ENCODE measurements at regions of chr5 and their contacts with region 1.

Region 1: DNA sequence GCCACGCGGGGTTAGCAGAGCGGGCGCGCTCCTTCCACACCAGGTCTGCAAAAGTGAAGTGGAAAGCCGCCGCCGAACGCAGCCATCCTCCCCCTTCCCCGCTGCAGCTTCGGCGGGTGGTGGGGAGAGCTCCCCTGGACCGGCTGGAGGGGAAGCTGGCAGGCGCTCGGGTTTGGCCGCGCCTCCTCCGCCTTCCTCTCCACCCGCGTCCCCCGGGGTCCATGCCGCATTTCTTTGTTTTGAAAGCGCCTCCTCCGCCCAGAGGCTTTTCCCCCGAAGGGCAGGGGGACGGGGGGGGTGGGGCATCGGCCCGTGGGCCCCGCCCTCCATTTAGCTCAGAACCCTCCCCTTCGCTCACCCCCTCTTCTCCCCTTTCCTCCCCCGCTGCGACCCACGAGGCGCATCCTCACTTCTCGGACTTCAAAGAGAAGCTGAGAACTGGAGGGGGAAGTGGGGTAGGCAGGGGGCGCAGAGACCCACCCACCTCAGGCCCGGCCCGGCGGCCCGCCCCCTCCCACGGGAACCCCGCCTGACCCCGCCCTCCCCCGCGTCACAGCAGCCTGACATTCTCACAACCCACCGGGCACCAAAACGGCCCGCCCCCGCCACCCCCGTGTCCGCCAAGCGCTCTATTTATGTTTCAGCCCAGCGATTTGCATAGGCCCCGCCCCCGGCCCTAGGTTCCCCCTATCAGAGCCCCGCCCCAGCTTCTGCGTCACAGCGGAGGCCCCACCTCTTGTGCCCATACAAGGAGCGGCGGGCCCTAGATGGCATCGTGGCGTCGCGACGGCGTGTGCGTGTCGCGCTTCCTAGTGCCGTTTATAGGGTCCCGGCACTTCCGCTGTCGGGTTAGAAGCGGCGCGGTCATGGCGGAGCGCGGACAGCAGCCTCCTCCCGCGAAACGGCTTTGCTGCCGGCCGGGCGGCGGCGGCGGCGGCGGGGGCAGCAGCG is at the start of gene ZSWIM6:
- DNase-seq: peak; percentile 98 to 100 (median 100)
- H3K4me3 ChIP-seq: peak within 1 kb of the TSS; percentile 74 to 98 (median 93)
- H3K27ac ChIP-seq: peak within 1 kb of the TSS; percentile 77 to 99 (median 96)
- H3K27me3 ChIP-seq: no peaks in the 10 kb centered on the region
- CTCF ChIP-seq: peak in 12 of 56 donors; percentile 8 to 46 (median 24)
- total RNA-seq, gene ZSWIM6: 22.5 to 67.2 (median 31.6) TPM

Region 2: GRCh38 chr5:61055434-61056006 is 276.2 kb before region 1 on chr5:
- intact Hi-C with region 1: loop called in 1 of 2 experiments (anchors 2 kb)
- DNase-seq: no peak
- H3K4me3 ChIP-seq: no peak overlapping the region
- H3K27ac ChIP-seq: no peak overlapping the region
- H3K27me3 ChIP-seq: no peaks in the 10 kb centered on the region
- CTCF ChIP-seq: peak in 55 of 56 donors; percentile 31 to 76 (median 57)

Region 3: DNA sequence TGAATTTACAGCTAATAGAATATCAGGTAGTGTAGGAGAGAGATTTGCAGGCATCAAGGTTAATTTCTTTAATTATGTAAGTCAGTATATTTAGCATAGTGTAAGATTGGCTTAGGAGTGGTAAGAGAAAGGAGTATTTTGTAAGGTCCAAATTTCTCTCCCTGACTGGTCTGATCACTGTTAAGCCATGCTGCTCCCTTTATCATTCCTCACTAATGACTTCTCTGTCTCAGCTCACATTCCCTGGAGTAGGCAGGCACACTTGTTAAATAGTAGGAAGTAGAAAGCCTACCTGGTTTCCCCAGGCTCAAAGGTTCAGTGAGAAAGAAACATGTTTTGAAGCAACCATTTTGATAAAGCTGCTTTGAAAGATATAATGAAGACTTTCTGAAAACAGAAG is 260.2 kb before region 1 on chr5:
- intact Hi-C with region 1: no loop called
- DNase-seq: no peak
- H3K4me3 ChIP-seq: no peak overlapping the region
- H3K27ac ChIP-seq: no peak overlapping the region
- H3K27me3 ChIP-seq: no peaks in the 10 kb centered on the region
- CTCF ChIP-seq: no peak

Region 4: DNA sequence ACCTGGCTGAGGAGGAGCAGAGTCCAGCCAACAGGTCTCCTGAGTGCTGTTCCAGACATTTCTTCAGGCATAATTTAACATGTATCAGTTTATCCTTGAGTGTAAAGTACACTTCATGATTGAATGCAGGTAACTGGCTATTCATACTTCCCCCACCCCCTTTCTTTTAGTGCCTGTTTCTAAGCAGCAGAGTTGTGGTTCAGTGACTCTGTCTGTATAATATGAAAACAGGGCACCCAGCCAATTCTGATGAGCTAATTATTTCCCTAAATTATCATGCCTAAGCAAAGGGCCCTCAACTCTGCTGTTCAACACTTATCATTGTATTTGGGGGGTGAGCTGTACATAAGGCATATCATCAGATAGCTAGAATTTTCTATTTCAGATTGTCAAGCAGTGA is 51.5 kb before region 1 on chr5:
- intact Hi-C with region 1: no loop called
- DNase-seq: no peak
- H3K4me3 ChIP-seq: no peak overlapping the region
- H3K27ac ChIP-seq: no peak overlapping the region
- H3K27me3 ChIP-seq: no peaks in the 10 kb centered on the region
- CTCF ChIP-seq: no peak

Region 5: GRCh38 chr5:61394078-61394704 is 62.5 kb after region 1 on chr5:
- intact Hi-C with region 1: loop called in 1 of 2 experiments (anchors 5 kb)
- DNase-seq: no peak
- H3K4me3 ChIP-seq: no peak overlapping the region
- H3K27ac ChIP-seq: peak overlapping the region in 9 of 59 donors; percentile 4 to 47 (median 32)
- H3K27me3 ChIP-seq: no peaks in the 10 kb centered on the region
- CTCF ChIP-seq: no peak

Region 6: DNA sequence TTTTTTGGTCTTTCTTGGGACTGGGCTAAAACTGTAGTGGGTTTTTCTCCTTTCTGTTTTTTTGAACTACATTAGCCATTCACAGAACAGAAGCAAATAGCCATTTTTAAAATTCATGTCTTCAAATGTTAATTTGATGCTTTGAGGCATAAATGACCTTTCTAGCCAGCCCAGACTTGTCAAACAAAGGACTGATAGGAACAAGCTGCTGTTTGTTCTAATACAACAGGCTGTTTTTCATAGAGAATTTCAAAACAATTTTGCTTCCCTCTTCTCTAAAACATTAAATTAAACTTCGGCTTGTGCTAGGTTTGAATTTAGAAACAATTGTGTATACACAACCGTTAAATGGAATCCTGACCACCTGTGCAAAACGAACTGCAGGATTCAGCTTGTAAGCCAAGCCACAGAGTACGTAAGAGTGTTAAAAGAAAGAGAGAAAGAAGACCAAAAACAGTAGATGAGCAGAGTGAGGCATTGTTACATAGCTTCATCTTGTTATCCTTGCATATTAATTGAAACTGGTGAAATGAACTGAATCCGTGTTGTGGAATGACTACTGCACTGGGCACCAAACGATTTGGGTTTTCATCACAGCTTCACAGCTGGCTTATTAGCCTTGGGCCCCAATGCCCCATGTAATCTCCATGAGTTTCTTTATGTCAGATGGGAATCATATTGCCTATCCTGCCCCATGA is 100.4 kb after region 1 on chr5:
- intact Hi-C with region 1: loop called in 1 of 2 experiments (anchors 5 kb)
- DNase-seq: no peak
- H3K4me3 ChIP-seq: peak overlapping the region in 45 of 59 donors; percentile 1 to 49 (median 24)
- H3K27ac ChIP-seq: peak overlapping the region; percentile 14 to 95 (median 85)
- H3K27me3 ChIP-seq: no peaks in the 10 kb centered on the region
- CTCF ChIP-seq: peak in 1 of 56 donors; percentile 10

Region 7: DNA sequence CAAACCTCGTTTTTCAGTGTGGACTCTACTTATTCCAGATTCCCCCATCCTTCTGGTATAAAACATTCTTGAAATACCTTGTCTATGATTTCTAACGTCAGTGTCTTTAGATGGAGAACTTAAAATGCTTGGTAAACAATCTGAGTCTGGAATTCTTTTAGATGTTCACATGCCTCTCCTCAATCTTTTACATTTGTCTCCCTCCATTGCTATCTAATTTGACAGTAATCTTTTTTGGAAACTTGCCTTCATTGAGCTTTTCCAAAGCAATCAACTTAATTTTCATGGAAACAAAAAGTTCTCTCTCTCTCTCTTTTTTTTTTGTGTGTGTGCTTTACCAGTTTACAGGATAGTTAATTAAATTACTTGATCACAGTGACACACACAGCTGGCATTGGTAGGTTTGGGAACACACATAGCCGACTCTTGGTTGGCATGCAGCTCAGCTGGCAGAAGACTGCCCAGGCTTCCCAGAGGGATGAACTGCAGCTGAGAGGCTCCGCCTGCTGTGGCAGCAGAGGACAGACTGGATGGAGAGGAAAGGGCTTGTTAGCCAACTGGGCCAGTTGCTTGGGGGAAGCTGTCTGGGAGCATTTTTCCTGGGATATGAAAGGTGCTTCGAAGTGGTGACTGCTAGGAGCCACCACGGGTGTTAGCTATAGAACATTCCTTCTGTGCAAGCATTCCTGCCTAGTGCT is 271.7 kb after region 1 on chr5:
- intact Hi-C with region 1: loop called in 1 of 2 experiments (anchors 5 kb)
- DNase-seq: peak in 9 of 10 donors; percentile 59 to 82 (median 78)
- H3K4me3 ChIP-seq: peak overlapping the region in 1 of 59 donors; percentile 18
- H3K27ac ChIP-seq: peak overlapping the region in 16 of 59 donors; percentile 3 to 70 (median 38)
- H3K27me3 ChIP-seq: no peaks in the 10 kb centered on the region
- CTCF ChIP-seq: peak in 51 of 56 donors; percentile 19 to 73 (median 47)

Region 8: GRCh38 chr5:61625681-61626621 is 294.3 kb after region 1 on chr5:
- intact Hi-C with region 1: loop called (anchors 2 to 5 kb)
- DNase-seq: peak; percentile 60 to 90 (median 84)
- H3K4me3 ChIP-seq: peak overlapping the region; percentile 40 to 74 (median 59)
- H3K27ac ChIP-seq: peak overlapping the region; percentile 77 to 99 (median 96)
- H3K27me3 ChIP-seq: no peaks in the 10 kb centered on the region
- CTCF ChIP-seq: peak in 27 of 56 donors; percentile 8 to 52 (median 29)

Region 9: GRCh38 chr5:61817472-61818326 is 486.0 kb after region 1 on chr5:
- intact Hi-C with region 1: loop called (anchors 2 to 5 kb)
- DNase-seq: peak; percentile 31 to 82 (median 72)
- H3K4me3 ChIP-seq: peak overlapping the region in 2 of 59 donors; percentile 13 to 14
- H3K27ac ChIP-seq: peak overlapping the region in 2 of 59 donors; percentile 6 to 10
- H3K27me3 ChIP-seq: peaks cover 0 to under 1% (median 0%) of the 10 kb centered on the region in 45 donors
- CTCF ChIP-seq: peak; percentile 40 to 87 (median 74)